ENCODE measurements at regions of chr1 and their contacts with region 1.

Region 1: GRCh38 chr1:27392096-27392777 is at the start of gene GPR3:
- DNase-seq: no peak
- H3K4me3 ChIP-seq: peak within 1 kb of the TSS; percentile 70
- H3K27me3 ChIP-seq: no peaks in the 10 kb centered on the region
- CTCF ChIP-seq: peak; percentile 77
- polyA plus RNA-seq, gene GPR3: 1.0 and 1.8 TPM in 2 replicates

Region 2: GRCh38 chr1:27102707-27103491 is 289.3 kb before region 1 on chr1:
- CTCF ChIA-PET with region 1: interaction called, 12 read pairs
- POLR2A ChIA-PET with region 1: no interaction called
- DNase-seq: no peak
- H3K4me3 ChIP-seq: no peak overlapping the region
- H3K27me3 ChIP-seq: no peaks in the 10 kb centered on the region
- CTCF ChIP-seq: peak; percentile 94

Region 3: GRCh38 chr1:27203946-27204345 is 188.3 kb before region 1 on chr1:
- CTCF ChIA-PET with region 1: no interaction called
- POLR2A ChIA-PET with region 1: no interaction called
- DNase-seq: no peak
- H3K4me3 ChIP-seq: no peak overlapping the region
- H3K27me3 ChIP-seq: no peaks in the 10 kb centered on the region
- CTCF ChIP-seq: no peak

Region 4: DNA sequence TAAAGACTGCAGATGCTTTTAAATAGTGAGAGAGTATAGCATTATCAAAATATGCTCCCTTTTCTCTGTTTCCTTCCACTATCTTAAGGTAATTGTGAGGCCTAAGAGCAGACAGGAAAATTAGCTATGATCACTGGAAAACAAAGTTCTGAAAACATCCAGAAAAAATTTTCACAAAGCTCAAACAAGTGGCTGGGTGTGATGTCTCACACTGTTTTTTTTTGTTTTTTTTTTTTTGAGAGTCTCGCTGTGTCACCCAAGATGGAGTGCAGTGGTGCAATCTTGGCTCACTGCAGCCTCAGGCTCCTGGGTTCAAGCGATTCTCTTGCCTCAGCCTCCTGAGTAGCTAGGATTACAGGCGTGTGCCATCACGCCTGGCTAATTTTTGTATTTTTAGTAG is 150.6 kb before region 1 on chr1:
- CTCF ChIA-PET with region 1: no interaction called
- POLR2A ChIA-PET with region 1: no interaction called
- DNase-seq: no peak
- H3K4me3 ChIP-seq: no peak overlapping the region
- H3K27me3 ChIP-seq: no peaks in the 10 kb centered on the region
- CTCF ChIP-seq: no peak

Region 5: DNA sequence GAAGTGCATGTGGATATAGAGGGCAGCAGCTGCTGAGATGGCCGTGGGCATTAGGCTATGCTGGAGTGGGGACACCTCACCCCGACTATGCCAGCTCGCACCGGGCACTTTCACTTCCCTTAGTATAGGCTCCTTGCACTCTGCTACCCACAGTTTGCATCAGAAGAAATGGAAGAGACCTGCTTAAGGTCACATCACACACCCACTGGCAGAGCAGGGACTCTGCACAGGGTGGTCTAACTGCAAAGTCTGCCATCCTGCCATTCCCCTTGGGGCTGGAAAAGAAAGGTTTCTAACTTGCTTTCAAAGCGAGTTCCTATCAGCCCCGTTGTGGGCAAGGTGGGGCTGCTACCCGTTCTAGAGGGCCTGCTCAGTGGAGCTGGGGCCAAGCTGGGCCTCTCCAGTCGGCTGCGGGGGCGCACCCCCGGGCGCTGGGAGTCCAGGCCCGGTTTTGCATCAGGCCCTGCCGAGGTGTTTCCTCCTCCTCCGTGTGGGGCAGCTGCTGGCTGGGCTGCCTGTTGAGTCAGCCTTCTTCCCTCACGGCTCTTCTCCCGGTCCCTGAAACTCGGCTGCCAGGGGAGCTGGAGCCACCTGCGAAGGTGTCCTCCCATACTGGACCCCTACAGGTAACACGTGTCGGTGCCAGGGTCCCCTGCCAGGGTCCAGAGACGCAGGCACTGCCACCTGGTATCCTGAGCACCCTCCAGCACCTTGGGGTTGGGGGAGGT is 50.5 kb before region 1 on chr1 and contains the start of gene SYTL1:
- CTCF ChIA-PET with region 1: interaction called, 10 read pairs
- POLR2A ChIA-PET with region 1: no interaction called
- DNase-seq: no peak
- H3K4me3 ChIP-seq: no peak within 1 kb of the TSS
- H3K27me3 ChIP-seq: no peaks in the 10 kb centered on the region
- CTCF ChIP-seq: no peak
- polyA plus RNA-seq, gene SYTL1: 0.20 and 0.23 TPM in 2 replicates

Region 6: DNA sequence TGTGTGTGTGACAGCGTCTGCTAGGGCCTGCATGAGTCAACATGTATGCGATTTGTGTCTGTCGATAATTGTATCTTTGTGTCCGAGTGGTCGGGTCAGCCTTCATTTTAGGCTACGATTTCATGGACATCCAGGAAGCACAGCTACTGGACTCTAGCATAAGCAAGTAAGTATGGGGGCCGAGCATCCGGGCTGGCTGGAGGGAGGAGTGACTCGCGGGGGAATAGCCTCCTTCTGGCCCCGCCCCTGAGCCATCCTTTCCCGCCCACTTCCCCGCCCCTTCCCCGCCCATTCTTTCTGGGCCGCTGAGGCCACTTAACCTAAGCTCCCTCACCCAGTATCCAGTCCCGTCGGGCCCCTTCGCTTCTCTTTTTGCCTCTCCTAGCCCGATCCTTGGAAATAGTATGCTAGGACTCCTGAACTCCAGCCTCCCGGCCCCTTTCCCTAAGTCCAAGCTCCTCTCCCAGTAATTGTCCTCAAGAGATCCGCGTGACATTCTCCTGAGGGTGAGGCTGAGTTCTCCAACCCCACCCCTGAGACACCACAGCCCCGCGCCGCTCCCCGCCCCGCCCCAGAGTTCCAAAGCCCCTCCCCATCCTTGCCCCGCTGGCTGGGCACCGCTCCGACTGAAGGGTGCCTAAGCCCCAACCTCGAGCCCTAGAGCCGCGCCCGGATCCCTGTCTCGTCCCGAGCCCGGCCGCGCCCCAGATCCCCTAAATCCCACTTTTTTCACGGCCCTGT is 26.7 kb before region 1 on chr1:
- CTCF ChIA-PET with region 1: interaction called, 29 read pairs
- POLR2A ChIA-PET with region 1: interaction called, 3 read pairs
- DNase-seq: peak; percentile 65
- H3K4me3 ChIP-seq: peak overlapping the region; percentile 56
- H3K27me3 ChIP-seq: no peaks in the 10 kb centered on the region
- CTCF ChIP-seq: no peak

Region 7: GRCh38 chr1:27416387-27417111 is 24.3 kb after region 1 on chr1:
- CTCF ChIA-PET with region 1: interaction called, 11 read pairs
- POLR2A ChIA-PET with region 1: no interaction called
- DNase-seq: no peak
- H3K4me3 ChIP-seq: no peak overlapping the region
- H3K27me3 ChIP-seq: no peaks in the 10 kb centered on the region
- CTCF ChIP-seq: peak; percentile 80

Region 8: GRCh38 chr1:27940297-27940696 is 548.1 kb after region 1 on chr1:
- CTCF ChIA-PET with region 1: no interaction called
- POLR2A ChIA-PET with region 1: no interaction called
- DNase-seq: no peak
- H3K4me3 ChIP-seq: no peak overlapping the region
- H3K27me3 ChIP-seq: peaks cover 3% of the 10 kb centered on the region; the same call in 1 of the 2 replicates
- CTCF ChIP-seq: peak; percentile 37